K562 (cell line): ENCODE measurements at regions of chr6 and their contacts with region 1.

Region 1: GRCh38 chr6:116615937-116616736 is at the start of gene RSPH4A:
- DNase-seq: peak; percentile 40 to 78 (median 64)
- ATAC-seq: peak; percentile 97
- H3K4me3 ChIP-seq: peak within 1 kb of the TSS; percentile 24
- H3K27ac ChIP-seq: no peak within 1 kb of the TSS
- H3K4me1 ChIP-seq: peaks cover 0 to 4% of the 10 kb centered on the region in 2 experiments; a peak in 2 of 5 replicates
- H3K27me3 ChIP-seq: peaks cover 0 to 7% of the 10 kb centered on the region in 2 experiments; a peak in 1 of 5 replicates
- CTCF ChIP-seq: peak in 1 of 3 experiments; percentile 27; a peak in 1 of 6 replicates
- EP300 ChIP-seq: no peak
- POLR2A ChIP-seq: no peak
- RAD21 ChIP-seq: peak in 1 of 2 experiments; percentile 5; a peak in 1 of 4 replicates
- polyA plus RNA-seq, gene RSPH4A: 0.07 to 0.08 TPM

Region 2: GRCh38 chr6:116586276-116586675 is 29.9 kb before region 1 on chr6:
- CTCF ChIA-PET with region 1: no interaction called
- POLR2A ChIA-PET with region 1: no interaction called
- in situ Hi-C with region 1: no loop called
- intact Hi-C with region 1: no loop called
- DNase-seq: no peak
- ATAC-seq: no peak
- H3K4me3 ChIP-seq: no peak overlapping the region
- H3K27ac ChIP-seq: no peak overlapping the region
- H3K4me1 ChIP-seq: no peaks in the 10 kb centered on the region
- H3K27me3 ChIP-seq: no peaks in the 10 kb centered on the region
- CTCF ChIP-seq: no peak
- EP300 ChIP-seq: no peak
- POLR2A ChIP-seq: no peak
- RAD21 ChIP-seq: no peak

Region 3: GRCh38 chr6:116605935-116606334 is 10.2 kb before region 1 on chr6:
- CTCF ChIA-PET with region 1: no interaction called
- POLR2A ChIA-PET with region 1: no interaction called
- in situ Hi-C with region 1: no loop called
- intact Hi-C with region 1: no loop called
- DNase-seq: no peak
- ATAC-seq: no peak
- H3K4me3 ChIP-seq: no peak overlapping the region
- H3K27ac ChIP-seq: no peak overlapping the region
- H3K4me1 ChIP-seq: no peaks in the 10 kb centered on the region; a peak in 1 of 5 replicates
- H3K27me3 ChIP-seq: no peaks in the 10 kb centered on the region
- CTCF ChIP-seq: no peak
- EP300 ChIP-seq: no peak
- POLR2A ChIP-seq: no peak
- RAD21 ChIP-seq: no peak

Region 4: DNA sequence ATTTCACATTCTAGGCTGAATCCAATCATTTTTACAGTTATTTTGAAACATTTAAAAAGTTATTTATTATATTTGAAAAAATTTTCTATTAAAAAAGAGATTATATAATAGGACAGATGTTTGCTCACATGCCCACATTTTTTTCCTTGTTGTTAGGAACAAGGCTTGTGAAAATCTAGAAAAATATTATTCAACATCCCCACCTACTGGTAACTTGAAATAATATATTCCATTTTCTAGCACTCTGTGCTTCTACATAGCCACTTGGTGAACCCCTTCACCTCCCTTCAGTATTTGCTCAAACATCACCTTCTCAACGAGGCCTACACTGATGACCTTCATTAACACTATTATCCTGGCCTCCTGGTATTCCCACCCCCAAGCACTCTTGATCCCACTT is 231.1 kb after region 1 on chr6:
- CTCF ChIA-PET with region 1: no interaction called
- POLR2A ChIA-PET with region 1: no interaction called
- in situ Hi-C with region 1: no loop called
- intact Hi-C with region 1: loop called (anchors 1 kb)
- DNase-seq: peak in 2 of 4 experiments; percentile 17 to 38
- ATAC-seq: peak; percentile 90
- H3K4me3 ChIP-seq: no peak overlapping the region
- H3K27ac ChIP-seq: no peak overlapping the region
- H3K4me1 ChIP-seq: no peaks in the 10 kb centered on the region
- H3K27me3 ChIP-seq: no peaks in the 10 kb centered on the region
- CTCF ChIP-seq: peak; percentile 28 to 67 (median 33); a peak in 3 of 6 replicates
- EP300 ChIP-seq: no peak
- POLR2A ChIP-seq: no peak
- RAD21 ChIP-seq: peak; percentile 59 to 62

Region 5: DNA sequence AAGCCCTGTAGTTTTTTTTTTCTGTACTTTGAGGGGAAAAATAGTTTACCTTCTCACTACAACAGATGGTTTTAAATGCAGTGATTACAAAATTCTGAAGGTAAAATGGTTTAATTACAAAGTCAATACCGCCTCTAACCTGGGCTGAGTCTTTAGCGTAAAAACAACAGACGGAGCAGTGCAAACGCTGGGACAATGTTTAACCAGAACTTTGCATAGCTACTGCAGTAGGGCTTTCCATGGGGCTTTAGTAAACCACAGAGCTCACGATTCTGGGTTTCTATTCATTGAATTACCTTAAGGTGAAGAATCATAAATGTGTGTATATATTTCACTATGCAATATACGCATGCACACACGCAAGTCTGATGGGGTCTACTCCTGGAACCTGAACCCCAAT is 338.8 kb after region 1 on chr6:
- CTCF ChIA-PET with region 1: no interaction called
- POLR2A ChIA-PET with region 1: no interaction called
- in situ Hi-C with region 1: no loop called
- intact Hi-C with region 1: loop called (anchors 10 kb)
- DNase-seq: no peak
- ATAC-seq: no peak
- H3K4me3 ChIP-seq: no peak overlapping the region
- H3K27ac ChIP-seq: no peak overlapping the region
- H3K4me1 ChIP-seq: no peaks in the 10 kb centered on the region
- H3K27me3 ChIP-seq: no peaks in the 10 kb centered on the region
- CTCF ChIP-seq: no peak
- EP300 ChIP-seq: no peak
- POLR2A ChIP-seq: no peak
- RAD21 ChIP-seq: no peak